H1 (cell line): ENCODE measurements at regions of chr14 and their contacts with region 1.

Region 1: GRCh38 chr14:102437997-102438915 is 71.3 kb downstream of the ANKRD9 start:
- DNase-seq: peak; percentile 75 to 94
- H3K4me3 ChIP-seq: peak overlapping the region in 1 of 4 experiments; percentile 25; a peak in 1 of 8 replicates
- H3K27ac ChIP-seq: no peak overlapping the region
- H3K4me1 ChIP-seq: peaks cover 0 to 3% (median 1%) of the 10 kb centered on the region in 4 experiments; a peak in 2 of 7 replicates
- H3K27me3 ChIP-seq: no peaks in the 10 kb centered on the region
- CTCF ChIP-seq: peak; percentile 87 to 92 (median 91)
- EP300 ChIP-seq: 0 out of 3 replicates have a peak, but pooled peaks of 1 of the 2 experiments have one; percentile 26
- POLR2A ChIP-seq: no peak
- RAD21 ChIP-seq: peak; percentile 86 to 89

Region 2: DNA sequence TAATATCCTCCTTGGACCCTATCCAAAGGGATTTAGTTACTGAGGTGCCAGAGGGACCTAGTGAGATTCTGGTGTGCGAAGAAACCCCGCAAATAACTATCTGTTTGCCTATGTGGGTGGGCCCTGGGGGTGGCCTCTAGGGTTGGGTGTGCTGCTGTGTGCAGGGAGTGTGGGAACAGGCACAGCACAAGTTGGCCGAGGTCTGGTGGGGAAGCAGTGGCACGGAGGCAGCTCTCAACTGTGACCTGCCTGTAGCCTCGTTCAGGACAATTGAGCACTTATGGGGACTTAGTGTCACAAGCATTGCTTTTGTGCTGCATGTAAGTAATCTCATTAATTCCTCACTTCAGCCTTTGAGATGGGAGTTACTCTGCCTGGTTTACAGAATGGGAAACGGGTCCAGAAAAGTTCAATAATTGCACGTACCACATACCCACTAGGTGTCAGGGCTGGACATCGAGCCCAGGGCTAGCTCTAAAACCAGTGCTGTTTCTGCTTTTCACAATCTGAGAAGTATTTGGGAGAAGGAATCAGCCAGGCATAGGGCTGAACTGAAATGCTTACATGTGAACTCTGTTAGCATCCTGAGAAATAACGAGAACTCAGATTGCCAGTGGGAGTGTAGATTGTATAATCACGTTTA is 16.7 kb before region 1 on chr14:
- CTCF ChIA-PET with region 1: interaction called, 26 read pairs
- POLR2A ChIA-PET with region 1: interaction called, 3 read pairs
- DNase-seq: no peak
- H3K4me3 ChIP-seq: no peak overlapping the region
- H3K27ac ChIP-seq: no peak overlapping the region
- H3K4me1 ChIP-seq: no peaks in the 10 kb centered on the region
- H3K27me3 ChIP-seq: no peaks in the 10 kb centered on the region
- CTCF ChIP-seq: no peak
- EP300 ChIP-seq: no peak
- POLR2A ChIP-seq: no peak
- RAD21 ChIP-seq: no peak

Region 3: GRCh38 chr14:102479107-102479715 is 41.0 kb after region 1 on chr14:
- CTCF ChIA-PET with region 1: interaction called, 17 read pairs
- POLR2A ChIA-PET with region 1: no interaction called
- DNase-seq: no peak
- H3K4me3 ChIP-seq: no peak overlapping the region
- H3K27ac ChIP-seq: no peak overlapping the region
- H3K4me1 ChIP-seq: no peaks in the 10 kb centered on the region
- H3K27me3 ChIP-seq: no peaks in the 10 kb centered on the region
- CTCF ChIP-seq: no peak
- EP300 ChIP-seq: no peak
- POLR2A ChIP-seq: no peak
- RAD21 ChIP-seq: no peak

Region 4: DNA sequence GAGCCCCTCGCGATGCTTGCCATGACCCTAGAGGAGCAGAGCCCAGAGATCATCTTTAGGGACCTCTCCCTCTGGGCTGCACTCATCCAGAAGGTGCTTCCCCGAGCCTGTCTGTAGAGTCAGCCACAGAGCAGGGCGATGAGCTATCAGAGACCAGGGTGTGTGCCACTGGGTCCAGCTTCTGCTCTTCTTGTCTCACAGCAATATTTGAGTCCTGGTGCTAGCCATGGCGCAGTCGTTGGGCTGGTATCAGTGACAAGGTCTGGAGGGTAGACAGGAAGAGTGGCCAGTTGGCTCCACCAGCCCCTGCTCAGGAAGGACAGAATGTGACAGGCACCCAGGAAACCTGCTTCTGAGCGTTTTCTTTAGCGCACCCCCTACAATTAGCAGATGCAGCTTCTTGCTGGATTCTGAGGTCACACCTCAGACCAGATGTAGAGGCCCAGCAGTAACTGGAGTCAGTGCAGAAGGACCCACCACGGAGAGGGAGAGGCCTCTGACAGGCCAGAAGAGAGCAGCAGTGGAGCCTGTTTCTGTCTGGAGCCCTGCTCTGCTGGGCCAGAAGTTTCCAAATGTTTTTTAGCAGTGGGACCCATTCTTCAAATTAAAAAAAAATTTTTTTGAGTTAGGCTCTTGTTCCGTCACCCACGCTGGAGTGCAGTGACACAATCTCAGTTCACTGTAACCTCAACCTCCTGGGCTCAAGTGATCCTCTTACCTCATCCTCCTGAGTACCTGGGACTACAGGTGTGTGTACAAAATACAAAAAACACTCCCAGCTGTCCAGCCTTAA is 47.6 kb after region 1 on chr14:
- CTCF ChIA-PET with region 1: interaction called, 17 read pairs
- POLR2A ChIA-PET with region 1: no interaction called
- DNase-seq: no peak
- H3K4me3 ChIP-seq: no peak overlapping the region
- H3K27ac ChIP-seq: no peak overlapping the region
- H3K4me1 ChIP-seq: no peaks in the 10 kb centered on the region
- H3K27me3 ChIP-seq: no peaks in the 10 kb centered on the region
- CTCF ChIP-seq: no peak
- EP300 ChIP-seq: no peak
- POLR2A ChIP-seq: no peak
- RAD21 ChIP-seq: no peak

Region 5: DNA sequence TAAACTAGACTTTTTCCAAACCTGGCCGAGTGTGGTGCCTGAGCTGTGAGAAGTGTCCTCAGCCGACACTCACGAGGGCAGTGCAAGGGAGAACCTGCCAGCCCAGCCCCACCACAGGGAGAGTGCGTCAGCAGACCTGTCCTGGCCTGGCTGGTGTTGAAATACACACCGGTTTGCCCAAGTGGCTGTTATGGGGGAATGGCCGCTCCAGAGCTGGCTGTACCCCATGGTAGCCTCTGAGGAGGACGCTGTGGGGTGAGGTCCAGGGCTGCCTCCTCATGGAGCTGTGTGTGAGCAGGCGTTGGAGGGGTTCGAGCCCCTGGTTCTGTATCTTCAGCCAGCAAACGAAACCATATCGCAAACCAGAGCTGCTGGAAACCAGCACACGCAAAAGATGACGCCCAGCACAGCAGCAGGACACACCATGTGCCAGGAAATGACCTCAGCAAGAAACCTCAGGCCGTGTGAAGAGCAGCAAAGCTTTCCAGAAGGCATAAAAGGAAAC is 62.0 kb after region 1 on chr14:
- CTCF ChIA-PET with region 1: interaction called, 42 read pairs
- POLR2A ChIA-PET with region 1: no interaction called
- DNase-seq: no peak
- H3K4me3 ChIP-seq: no peak overlapping the region
- H3K27ac ChIP-seq: no peak overlapping the region
- H3K4me1 ChIP-seq: no peaks in the 10 kb centered on the region; a peak in 1 of 7 replicates
- H3K27me3 ChIP-seq: no peaks in the 10 kb centered on the region; a peak in 1 of 7 replicates
- CTCF ChIP-seq: no peak
- EP300 ChIP-seq: no peak
- POLR2A ChIP-seq: no peak
- RAD21 ChIP-seq: no peak

Region 6: DNA sequence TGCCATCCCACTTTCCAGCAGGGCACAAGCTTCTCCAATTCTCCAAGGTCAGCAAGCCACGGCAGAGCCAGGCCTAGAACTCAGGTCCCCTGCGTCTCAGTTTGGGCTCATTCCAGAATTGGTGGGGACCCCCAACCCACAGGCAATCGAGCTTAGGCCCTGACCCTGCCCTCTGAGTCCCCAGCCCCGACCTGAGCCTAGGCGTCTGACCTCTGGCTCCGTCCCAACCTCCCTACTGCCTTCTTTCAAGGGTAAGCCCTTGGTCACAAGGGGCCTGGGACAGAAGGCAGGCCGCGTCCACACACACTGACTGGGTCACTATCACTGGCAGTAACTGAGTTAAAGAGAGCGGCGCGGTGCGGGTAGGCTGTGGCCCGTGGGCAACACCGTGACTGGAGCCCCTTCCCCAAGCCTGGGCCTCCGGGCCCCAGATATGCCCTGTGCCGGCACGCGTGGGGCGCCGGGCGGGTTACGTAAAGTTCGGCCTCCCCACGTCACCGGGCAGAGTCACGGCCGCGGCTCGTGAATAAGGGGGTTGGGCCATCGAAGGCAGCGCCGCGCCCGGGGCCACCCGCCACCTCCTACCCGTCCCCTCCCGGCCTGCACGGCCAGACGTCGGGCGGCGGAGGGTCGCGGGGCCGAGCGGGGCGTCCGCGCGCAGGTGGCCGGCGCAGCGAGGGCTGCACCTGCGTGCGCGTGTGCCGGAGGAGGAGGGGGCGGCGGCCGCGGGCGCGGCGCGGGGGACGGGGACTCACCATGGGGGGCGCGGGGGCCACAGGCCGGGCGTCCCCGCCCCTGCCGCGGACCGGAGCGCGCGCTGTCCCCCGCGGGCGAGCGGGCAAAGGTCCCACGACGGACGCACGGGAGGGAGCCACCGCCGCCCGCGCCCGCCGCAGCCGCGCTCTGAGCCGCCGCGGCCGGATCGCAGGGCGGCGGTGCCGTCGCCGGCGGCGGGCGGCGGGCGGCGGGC is 70.8 kb after region 1 on chr14:
- CTCF ChIA-PET with region 1: interaction called, 21 read pairs
- POLR2A ChIA-PET with region 1: interaction called, 4 read pairs
- DNase-seq: no peak
- H3K4me3 ChIP-seq: peak overlapping the region; percentile 67 to 92 (median 68)
- H3K27ac ChIP-seq: no peak overlapping the region
- H3K4me1 ChIP-seq: peaks cover 0 to 16% (median 11%) of the 10 kb centered on the region in 4 experiments; a peak in 6 of 7 replicates
- H3K27me3 ChIP-seq: no peaks in the 10 kb centered on the region
- CTCF ChIP-seq: no peak
- EP300 ChIP-seq: no peak
- POLR2A ChIP-seq: no peak; a peak in 1 of 3 replicates
- RAD21 ChIP-seq: no peak

Region 7: DNA sequence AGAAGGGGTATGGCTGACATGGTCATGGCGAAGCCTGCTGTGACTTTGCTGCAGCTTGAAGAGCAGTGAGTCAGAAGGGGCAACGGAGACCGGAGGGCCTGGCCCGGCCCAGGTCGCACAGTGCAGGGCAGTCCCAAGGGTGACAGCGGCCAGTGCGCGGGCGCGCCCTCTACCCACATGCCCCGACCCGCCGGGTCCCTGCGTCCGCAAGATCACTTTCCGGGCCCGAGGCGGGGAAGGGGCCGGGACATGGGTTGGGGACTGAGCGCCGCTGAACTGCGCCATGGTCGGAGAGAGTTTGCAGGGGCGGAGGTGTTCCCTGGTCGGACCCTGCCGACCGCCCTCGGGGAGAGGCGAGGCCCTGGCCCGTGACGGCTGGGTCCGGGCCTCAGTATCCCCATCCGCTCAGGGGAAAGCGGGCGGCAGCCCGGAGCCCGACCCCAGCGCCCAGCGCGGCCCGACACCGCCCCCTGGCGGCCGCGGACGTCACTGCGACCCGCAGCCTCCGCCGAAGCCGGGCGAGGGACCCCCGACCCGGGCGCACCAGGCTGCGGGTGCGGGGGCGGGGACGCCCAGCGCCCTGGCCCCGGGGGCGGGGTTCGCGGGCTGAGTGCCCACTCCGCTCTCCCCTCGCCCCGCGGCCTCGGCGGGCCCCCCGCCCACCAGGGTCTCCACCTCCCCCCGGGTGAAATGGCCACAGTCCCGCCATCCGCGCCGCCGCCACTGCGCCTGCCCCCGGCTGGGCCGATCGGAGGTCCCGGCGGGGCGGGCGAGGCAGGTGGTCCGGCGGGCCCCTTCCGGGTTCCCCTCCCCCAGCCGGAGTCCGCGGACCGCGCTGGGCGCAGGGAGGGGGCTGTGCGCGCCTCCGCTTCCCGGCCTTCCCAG is 78.5 kb after region 1 on chr14:
- CTCF ChIA-PET with region 1: interaction called, 25 read pairs
- POLR2A ChIA-PET with region 1: no interaction called
- DNase-seq: peak in 1 of 2 experiments; percentile 95
- H3K4me3 ChIP-seq: peak overlapping the region; percentile 48 to 81 (median 62)
- H3K27ac ChIP-seq: no peak overlapping the region
- H3K4me1 ChIP-seq: peaks cover 0 to 5% (median under 1%) of the 10 kb centered on the region in 4 experiments; a peak in 2 of 7 replicates
- H3K27me3 ChIP-seq: peaks cover 0 to 4% (median 1%) of the 10 kb centered on the region in 4 experiments; a peak in 2 of 7 replicates
- CTCF ChIP-seq: peak in 2 of 3 experiments; percentile 81 to 90; a peak in 3 of 4 replicates
- EP300 ChIP-seq: no peak
- POLR2A ChIP-seq: no peak
- RAD21 ChIP-seq: peak; percentile 68 to 84

Region 8: GRCh38 chr14:102645746-102646440 is 207.6 kb after region 1 on chr14:
- CTCF ChIA-PET with region 1: no interaction called
- POLR2A ChIA-PET with region 1: no interaction called
- DNase-seq: no peak
- H3K4me3 ChIP-seq: no peak overlapping the region
- H3K27ac ChIP-seq: no peak overlapping the region
- H3K4me1 ChIP-seq: peaks cover 0 to 12% (median 5%) of the 10 kb centered on the region in 4 experiments; a peak in 4 of 7 replicates
- H3K27me3 ChIP-seq: no peaks in the 10 kb centered on the region
- CTCF ChIP-seq: no peak
- EP300 ChIP-seq: no peak
- POLR2A ChIP-seq: no peak
- RAD21 ChIP-seq: no peak

Region 9: DNA sequence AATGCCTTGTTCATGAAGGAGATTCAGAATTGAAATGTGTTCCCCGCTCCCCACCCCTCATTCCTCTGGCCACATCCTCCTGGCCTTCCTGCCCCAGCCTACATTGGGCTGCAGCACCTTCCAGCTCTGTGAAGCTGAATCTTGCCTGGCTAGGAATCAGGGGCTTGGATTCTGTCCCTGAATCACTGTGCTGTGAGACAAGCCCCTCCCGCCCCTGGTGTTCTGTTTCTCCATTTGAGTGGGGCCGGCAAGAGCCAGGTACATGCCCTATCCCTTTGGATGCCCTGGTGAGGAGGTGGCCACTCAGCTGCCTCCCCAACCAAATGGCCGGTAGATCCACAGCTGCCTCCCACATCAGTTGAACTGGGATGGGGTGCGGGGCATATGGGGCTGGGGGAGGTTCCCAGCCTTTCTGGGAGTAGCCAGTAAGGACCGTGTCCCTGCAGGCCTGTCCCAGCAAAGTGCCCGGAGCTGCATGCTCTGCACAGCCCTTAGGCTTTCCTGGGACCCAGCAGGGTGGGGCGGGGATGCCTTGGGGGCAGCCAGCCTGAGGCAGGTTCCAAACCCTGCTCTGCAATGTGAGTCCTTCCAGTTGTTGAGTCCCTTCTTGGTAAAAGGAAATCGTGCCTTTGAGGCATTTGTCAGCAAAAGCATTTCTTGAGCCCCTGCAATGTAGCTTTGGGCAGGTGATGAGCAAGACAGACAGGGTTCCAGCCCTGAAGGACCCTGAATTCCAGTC is 300.7 kb after region 1 on chr14:
- CTCF ChIA-PET with region 1: no interaction called
- POLR2A ChIA-PET with region 1: no interaction called
- DNase-seq: peak in 1 of 2 experiments; percentile 46
- H3K4me3 ChIP-seq: no peak overlapping the region
- H3K27ac ChIP-seq: no peak overlapping the region
- H3K4me1 ChIP-seq: no peaks in the 10 kb centered on the region
- H3K27me3 ChIP-seq: no peaks in the 10 kb centered on the region
- CTCF ChIP-seq: no peak
- EP300 ChIP-seq: no peak
- POLR2A ChIP-seq: no peak
- RAD21 ChIP-seq: no peak